H1 (cell line): ENCODE measurements at regions of chr7 and their contacts with region 1.

Region 1: GRCh38 chr7:104983578-104984539 is 30.1 kb upstream of the KMT2E start:
- DNase-seq: peak; percentile 58 to 87
- H3K4me3 ChIP-seq: peak overlapping the region; percentile 59 to 72 (median 66)
- H3K27ac ChIP-seq: peak overlapping the region; percentile 90
- H3K4me1 ChIP-seq: peaks cover 0 to 13% (median 8%) of the 10 kb centered on the region in 4 experiments; a peak in 4 of 7 replicates
- H3K27me3 ChIP-seq: no peaks in the 10 kb centered on the region
- CTCF ChIP-seq: peak; percentile 41 to 61 (median 52)
- EP300 ChIP-seq: 0 out of 3 replicates have a peak, but pooled peaks of 1 of the 2 experiments have one; percentile 63
- POLR2A ChIP-seq: peak; percentile 72 to 98
- RAD21 ChIP-seq: peak; percentile 17 to 41; a peak in 3 of 4 replicates

Region 2: GRCh38 chr7:104923010-104923421 is 60.8 kb before region 1 on chr7:
- CTCF ChIA-PET with region 1: interaction called, 18 read pairs
- POLR2A ChIA-PET with region 1: interaction called, 6 read pairs
- DNase-seq: peak; percentile 41 to 63
- H3K4me3 ChIP-seq: no peak overlapping the region
- H3K27ac ChIP-seq: no peak overlapping the region
- H3K4me1 ChIP-seq: no peaks in the 10 kb centered on the region; a peak in 1 of 7 replicates
- H3K27me3 ChIP-seq: no peaks in the 10 kb centered on the region
- CTCF ChIP-seq: peak; percentile 57 to 87 (median 73)
- EP300 ChIP-seq: no peak
- POLR2A ChIP-seq: no peak
- RAD21 ChIP-seq: peak; percentile 96 to 97

Region 3: DNA sequence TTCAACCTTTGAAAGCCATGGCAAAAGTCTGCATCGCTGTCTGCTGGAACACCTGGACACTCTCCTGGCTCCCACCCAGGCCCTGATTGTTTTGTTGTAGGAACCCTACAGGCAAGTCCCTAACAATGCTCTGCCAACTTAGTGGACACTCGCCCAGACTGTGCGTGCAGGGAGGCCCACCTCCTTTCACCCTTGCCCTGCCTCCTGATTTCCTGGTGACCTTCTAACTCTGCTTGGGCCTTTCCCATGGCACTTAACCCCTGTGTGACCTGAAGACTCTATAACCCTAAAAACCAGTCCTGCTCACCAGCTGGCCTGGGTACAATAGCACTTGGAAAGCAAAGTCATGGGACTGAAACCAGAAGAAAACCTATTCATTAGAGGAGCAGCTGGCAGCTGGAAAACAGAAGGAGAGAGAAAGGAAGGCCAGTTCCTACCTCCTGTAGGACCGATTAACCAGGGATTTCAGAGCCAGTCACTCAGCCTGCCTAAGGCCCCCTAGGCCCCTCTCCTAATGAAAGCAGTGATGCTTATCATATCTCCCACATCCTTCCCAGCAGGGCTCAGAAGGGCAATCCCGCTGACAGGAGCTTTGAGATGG is 52.6 kb before region 1 on chr7:
- CTCF ChIA-PET with region 1: interaction called, 12 read pairs
- POLR2A ChIA-PET with region 1: interaction called, 4 read pairs
- DNase-seq: no peak
- H3K4me3 ChIP-seq: no peak overlapping the region
- H3K27ac ChIP-seq: no peak overlapping the region
- H3K4me1 ChIP-seq: peaks cover 0 to 11% (median 4%) of the 10 kb centered on the region in 4 experiments; a peak in 4 of 7 replicates
- H3K27me3 ChIP-seq: no peaks in the 10 kb centered on the region
- CTCF ChIP-seq: no peak
- EP300 ChIP-seq: no peak
- POLR2A ChIP-seq: no peak
- RAD21 ChIP-seq: no peak

Region 4: GRCh38 chr7:104960741-104961448 is 23.0 kb before region 1 on chr7:
- CTCF ChIA-PET with region 1: interaction called, 12 read pairs
- POLR2A ChIA-PET with region 1: interaction called, 14 read pairs
- DNase-seq: no peak
- H3K4me3 ChIP-seq: no peak overlapping the region
- H3K27ac ChIP-seq: no peak overlapping the region; the same call in 1 of the 2 replicates
- H3K4me1 ChIP-seq: no peaks in the 10 kb centered on the region
- H3K27me3 ChIP-seq: no peaks in the 10 kb centered on the region
- CTCF ChIP-seq: no peak
- EP300 ChIP-seq: no peak
- POLR2A ChIP-seq: no peak
- RAD21 ChIP-seq: no peak

Region 5: DNA sequence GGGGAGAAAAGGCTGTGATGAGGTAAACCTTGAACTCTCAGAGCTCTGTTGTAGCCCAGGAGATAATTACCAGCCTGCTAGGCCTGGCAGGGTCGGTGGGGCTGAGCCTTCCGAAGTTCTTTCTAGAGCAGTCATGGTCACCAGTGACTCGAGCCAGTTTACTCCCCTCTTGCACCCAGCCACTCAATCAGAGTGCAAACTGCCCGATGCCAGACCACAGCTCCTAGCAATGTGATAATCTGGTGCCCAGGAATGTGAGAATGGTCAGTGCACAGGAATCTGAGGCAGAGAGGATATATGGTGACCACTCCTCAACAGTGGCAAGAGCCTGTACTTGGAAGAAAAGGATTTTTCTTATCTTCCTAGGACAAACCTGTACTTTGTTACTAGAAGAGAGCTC is 16.3 kb before region 1 on chr7:
- CTCF ChIA-PET with region 1: interaction called, 13 read pairs
- POLR2A ChIA-PET with region 1: interaction called, 36 read pairs
- DNase-seq: no peak
- H3K4me3 ChIP-seq: no peak overlapping the region
- H3K27ac ChIP-seq: no peak overlapping the region
- H3K4me1 ChIP-seq: no peaks in the 10 kb centered on the region
- H3K27me3 ChIP-seq: no peaks in the 10 kb centered on the region
- CTCF ChIP-seq: no peak
- EP300 ChIP-seq: no peak
- POLR2A ChIP-seq: no peak
- RAD21 ChIP-seq: no peak

Region 6: GRCh38 chr7:105003275-105003674 is 19.4 kb after region 1 on chr7:
- CTCF ChIA-PET with region 1: interaction called, 27 read pairs
- POLR2A ChIA-PET with region 1: interaction called, 63 read pairs
- DNase-seq: no peak
- H3K4me3 ChIP-seq: no peak overlapping the region
- H3K27ac ChIP-seq: no peak overlapping the region
- H3K4me1 ChIP-seq: peaks cover 0 to 8% (median 0%) of the 10 kb centered on the region in 4 experiments; a peak in 2 of 7 replicates
- H3K27me3 ChIP-seq: no peaks in the 10 kb centered on the region
- CTCF ChIP-seq: no peak
- EP300 ChIP-seq: no peak
- POLR2A ChIP-seq: no peak
- RAD21 ChIP-seq: no peak

Region 7: GRCh38 chr7:105013221-105013815 is 29.5 kb after region 1 on chr7:
- CTCF ChIA-PET with region 1: interaction called, 27 read pairs
- POLR2A ChIA-PET with region 1: interaction called, 118 read pairs
- DNase-seq: peak; percentile 65 to 88
- H3K4me3 ChIP-seq: peak overlapping the region; percentile 89 to 99 (median 97)
- H3K27ac ChIP-seq: peak overlapping the region; percentile 100
- H3K4me1 ChIP-seq: peaks cover 0 to 9% (median 1%) of the 10 kb centered on the region in 4 experiments; a peak in 3 of 7 replicates
- H3K27me3 ChIP-seq: no peaks in the 10 kb centered on the region
- CTCF ChIP-seq: peak; percentile 37 to 58 (median 40)
- EP300 ChIP-seq: no peak
- POLR2A ChIP-seq: peak in 1 of 2 experiments; percentile 92; a peak in 2 of 3 replicates
- RAD21 ChIP-seq: no peak